Endothelial cell of umbilical vein (primary cell): ENCODE measurements at regions of chr6 and their contacts with region 1.

Region 1: GRCh38 chr6:1619673-1620503 is 10.2 kb downstream of the FOXC1 start:
- DNase-seq: peak; percentile 61
- H3K4me3 ChIP-seq: peak overlapping the region in 1 of 3 experiments; percentile 17
- H3K27ac ChIP-seq: no peak overlapping the region
- H3K4me1 ChIP-seq: peaks cover 45% of the 10 kb centered on the region
- H3K27me3 ChIP-seq: no peaks in the 10 kb centered on the region
- CTCF ChIP-seq: no peak
- POLR2A ChIP-seq: no peak

Region 2: DNA sequence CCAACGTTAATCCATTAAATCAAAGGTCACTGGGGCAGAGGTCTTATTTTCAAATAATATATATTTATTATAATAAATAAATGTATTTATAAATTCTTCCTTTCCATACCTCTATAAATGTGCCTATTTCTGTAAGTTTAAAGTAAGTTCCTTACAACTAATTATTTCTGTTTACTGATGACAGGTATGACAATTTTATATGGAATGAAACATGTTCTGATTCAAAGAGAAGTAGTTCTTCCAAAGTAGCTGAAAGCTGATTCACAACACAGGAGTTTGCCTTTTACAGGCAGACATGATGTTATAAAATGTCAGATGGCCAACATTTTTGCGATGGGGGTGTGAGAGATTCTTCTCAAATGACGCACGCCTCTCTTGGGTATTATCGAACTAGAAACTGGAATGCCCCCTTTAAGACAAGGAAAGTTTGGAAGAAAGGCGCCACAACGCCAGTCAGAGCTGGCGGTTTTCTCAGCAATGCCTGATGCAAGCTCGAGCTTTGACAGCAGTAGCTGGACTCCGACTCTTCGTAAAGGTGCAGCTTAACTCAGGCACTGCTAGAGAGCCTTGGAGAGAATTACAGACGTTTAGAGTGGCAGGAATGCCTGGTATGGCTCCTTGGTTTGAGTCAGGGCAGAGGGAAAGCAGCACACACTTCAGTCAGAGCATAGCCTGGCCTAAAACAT is 81.9 kb after region 1 on chr6:
- CTCF ChIA-PET with region 1: no interaction called
- POLR2A ChIA-PET with region 1: no interaction called
- dilution Hi-C with region 1: no loop called
- intact Hi-C with region 1: no loop called
- DNase-seq: no peak
- H3K4me3 ChIP-seq: no peak overlapping the region
- H3K27ac ChIP-seq: no peak overlapping the region
- H3K4me1 ChIP-seq: no peaks in the 10 kb centered on the region
- H3K27me3 ChIP-seq: no peaks in the 10 kb centered on the region
- CTCF ChIP-seq: no peak
- POLR2A ChIP-seq: no peak

Region 3: GRCh38 chr6:2028457-2029038 is 408.7 kb after region 1 on chr6:
- CTCF ChIA-PET with region 1: no interaction called
- POLR2A ChIA-PET with region 1: no interaction called
- dilution Hi-C with region 1: no loop called
- intact Hi-C with region 1: loop called (anchors 5 kb)
- DNase-seq: peak; percentile 79
- H3K4me3 ChIP-seq: peak overlapping the region in 1 of 3 experiments; percentile 3
- H3K27ac ChIP-seq: peak overlapping the region; percentile 39
- H3K4me1 ChIP-seq: peaks cover 25% of the 10 kb centered on the region
- H3K27me3 ChIP-seq: no peaks in the 10 kb centered on the region
- CTCF ChIP-seq: no peak
- POLR2A ChIP-seq: no peak